IMR-90 (cell line): ENCODE measurements at regions of chrX and their contacts with region 1.

Region 1: GRCh38 chrX:71068049-71068763 is at the start of gene SNX12:
- DNase-seq: peak; percentile 94
- ATAC-seq: peak; percentile 99
- H3K4me3 ChIP-seq: peak within 1 kb of the TSS; percentile 85
- H3K27ac ChIP-seq: peak within 1 kb of the TSS; percentile 91
- H3K4me1 ChIP-seq: no peaks in the 10 kb centered on the region
- H3K27me3 ChIP-seq: peaks cover under 1% of the 10 kb centered on the region; the same call in 1 of the 2 replicates
- CTCF ChIP-seq: no peak
- POLR2A ChIP-seq: peak; percentile 34; the same call in 1 of the 2 replicates
- RAD21 ChIP-seq: no peak
- total RNA-seq, gene SNX12: 43.0 and 59.9 TPM in 2 replicates

Region 2: GRCh38 chrX:70635227-70635626 is 433.0 kb before region 1 on chrX:
- CTCF ChIA-PET with region 1: no interaction called
- POLR2A ChIA-PET with region 1: no interaction called
- dilution Hi-C with region 1: no loop called
- in situ Hi-C with region 1: no loop called
- intact Hi-C with region 1: no loop called
- DNase-seq: no peak
- ATAC-seq: no peak
- H3K4me3 ChIP-seq: no peak overlapping the region
- H3K27ac ChIP-seq: no peak overlapping the region
- H3K4me1 ChIP-seq: no peaks in the 10 kb centered on the region
- H3K27me3 ChIP-seq: no peaks in the 10 kb centered on the region
- CTCF ChIP-seq: no peak
- POLR2A ChIP-seq: no peak
- RAD21 ChIP-seq: no peak

Region 3: DNA sequence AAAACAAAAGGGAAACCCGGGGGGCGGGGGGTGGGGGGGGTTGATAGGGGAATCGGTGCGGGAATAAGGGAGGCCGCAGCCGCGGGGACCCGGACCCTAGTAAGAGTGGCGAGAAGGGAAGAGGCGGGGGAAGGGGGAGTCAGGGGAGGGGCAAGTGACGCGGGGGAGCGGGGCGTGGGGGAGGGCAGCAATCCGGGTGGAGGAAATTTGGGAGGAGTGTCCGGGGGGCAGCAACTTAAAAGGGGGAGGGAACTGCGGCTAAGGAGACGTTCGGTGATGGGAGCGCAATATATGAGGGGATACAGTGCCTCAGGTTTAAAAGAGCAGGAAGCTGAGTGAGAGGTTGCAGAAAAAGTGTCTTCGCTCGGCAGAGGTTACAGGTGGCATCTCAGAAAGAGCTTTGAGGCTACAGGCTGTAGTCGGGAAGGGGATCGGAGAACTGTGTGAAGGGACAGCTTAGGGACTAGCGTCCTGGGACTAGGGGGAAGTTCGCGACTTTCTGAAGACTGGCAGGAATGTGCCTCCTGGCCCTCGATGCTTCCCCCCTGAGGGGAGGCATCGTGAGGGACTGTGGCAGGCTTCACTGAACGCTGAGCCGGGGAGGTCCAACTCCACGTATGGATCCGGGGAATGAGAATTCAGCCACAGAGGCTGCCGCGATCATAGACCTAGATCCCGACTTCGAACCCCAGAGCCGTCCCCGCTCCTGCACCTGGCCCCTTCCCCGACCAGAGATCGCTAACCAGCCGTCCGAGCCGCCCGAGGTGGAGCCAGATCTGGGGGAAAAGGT is 27.9 kb after region 1 on chrX:
- CTCF ChIA-PET with region 1: no interaction called
- POLR2A ChIA-PET with region 1: no interaction called
- dilution Hi-C with region 1: no loop called
- in situ Hi-C with region 1: no loop called
- intact Hi-C with region 1: loop called (anchors 2 kb)
- DNase-seq: peak; percentile 30
- ATAC-seq: peak; percentile 66
- H3K4me3 ChIP-seq: peak overlapping the region; percentile 89
- H3K27ac ChIP-seq: no peak overlapping the region
- H3K4me1 ChIP-seq: no peaks in the 10 kb centered on the region
- H3K27me3 ChIP-seq: peaks cover 21% of the 10 kb centered on the region
- CTCF ChIP-seq: no peak
- POLR2A ChIP-seq: no peak
- RAD21 ChIP-seq: no peak